CD4-positive, alpha-beta T cell (primary cell): ENCODE measurements at regions of chr16 and their contacts with region 1.

Region 1: DNA sequence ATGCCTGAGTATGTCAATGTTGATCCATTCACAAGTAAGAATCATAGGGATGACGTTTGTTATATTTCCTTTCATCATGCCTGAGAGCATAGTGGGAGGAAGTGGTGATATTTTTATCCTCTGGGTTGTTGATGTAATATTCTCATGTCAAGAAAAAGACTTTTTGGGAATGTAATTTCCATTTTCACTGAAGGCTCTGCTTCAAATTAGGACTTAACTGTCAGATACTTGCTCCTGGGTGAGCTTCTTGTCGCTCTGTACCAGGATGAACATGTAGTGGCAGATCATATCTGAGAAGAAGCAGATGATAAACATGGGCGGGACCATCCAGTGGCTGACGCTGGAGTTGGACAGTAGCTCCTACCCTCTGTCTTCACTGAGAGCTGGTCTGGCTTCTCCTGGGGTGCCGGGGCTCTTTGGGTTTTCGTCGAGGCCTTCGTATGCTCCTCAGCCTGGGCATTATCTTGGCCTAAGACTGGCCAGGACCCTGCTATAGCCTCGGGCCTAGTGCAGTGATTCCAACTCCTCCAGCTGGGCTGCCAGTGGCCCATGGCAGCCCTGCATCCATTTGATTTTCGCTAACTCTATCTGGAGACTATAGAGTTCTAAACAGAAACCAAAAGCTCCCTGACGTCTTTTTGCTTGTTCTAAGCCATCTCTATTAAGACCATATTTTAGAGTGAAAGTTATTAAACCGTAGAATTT is 19.7 kb downstream of the CYB5B start:
- DNase-seq: peak in 11 of 14 experiments; percentile 4 to 76 (median 25)
- ATAC-seq: peak; percentile 78
- H3K4me3 ChIP-seq: peak overlapping the region; percentile 32
- H3K4me3 Mint-ChIP-seq: peak overlapping the region; percentile 88
- H3K27ac ChIP-seq: peak overlapping the region; percentile 73 to 79
- H3K27ac Mint-ChIP-seq: peak overlapping the region; percentile 99
- H3K4me1 ChIP-seq: peaks cover 23% of the 10 kb centered on the region
- H3K4me1 Mint-ChIP-seq: peaks cover 43% of the 10 kb centered on the region
- H3K27me3 ChIP-seq: no peaks in the 10 kb centered on the region
- H3K27me3 Mint-ChIP-seq: no peaks in the 10 kb centered on the region
- CTCF ChIP-seq: no peak

Region 2: GRCh38 chr16:69565671-69566239 is 121.7 kb after region 1 on chr16 and contains the start of gene NFAT5:
- CTCF ChIA-PET with region 1: no interaction called
- POLR2A ChIA-PET with region 1: interaction called, 23 read pairs
- intact Hi-C with region 1: loop called in 1 of 2 experiments (anchors 2 kb)
- DNase-seq: peak; percentile 71 to 95 (median 88)
- ATAC-seq: peak; percentile 80
- H3K4me3 ChIP-seq: peak within 1 kb of the TSS; percentile 84
- H3K4me3 Mint-ChIP-seq: peak within 1 kb of the TSS; percentile 100
- H3K27ac ChIP-seq: peak within 1 kb of the TSS; percentile 75 to 93
- H3K27ac Mint-ChIP-seq: peak within 1 kb of the TSS; percentile 96
- H3K4me1 ChIP-seq: peaks cover 31% of the 10 kb centered on the region
- H3K4me1 Mint-ChIP-seq: peaks cover 47% of the 10 kb centered on the region
- H3K27me3 ChIP-seq: no peaks in the 10 kb centered on the region
- H3K27me3 Mint-ChIP-seq: no peaks in the 10 kb centered on the region
- CTCF ChIP-seq: no peak
- total RNA-seq, gene NFAT5: 19.5 to 21.2 TPM